Endothelial cell of umbilical vein (primary cell): ENCODE measurements at regions of chr6 and their contacts with region 1.

Region 1: DNA sequence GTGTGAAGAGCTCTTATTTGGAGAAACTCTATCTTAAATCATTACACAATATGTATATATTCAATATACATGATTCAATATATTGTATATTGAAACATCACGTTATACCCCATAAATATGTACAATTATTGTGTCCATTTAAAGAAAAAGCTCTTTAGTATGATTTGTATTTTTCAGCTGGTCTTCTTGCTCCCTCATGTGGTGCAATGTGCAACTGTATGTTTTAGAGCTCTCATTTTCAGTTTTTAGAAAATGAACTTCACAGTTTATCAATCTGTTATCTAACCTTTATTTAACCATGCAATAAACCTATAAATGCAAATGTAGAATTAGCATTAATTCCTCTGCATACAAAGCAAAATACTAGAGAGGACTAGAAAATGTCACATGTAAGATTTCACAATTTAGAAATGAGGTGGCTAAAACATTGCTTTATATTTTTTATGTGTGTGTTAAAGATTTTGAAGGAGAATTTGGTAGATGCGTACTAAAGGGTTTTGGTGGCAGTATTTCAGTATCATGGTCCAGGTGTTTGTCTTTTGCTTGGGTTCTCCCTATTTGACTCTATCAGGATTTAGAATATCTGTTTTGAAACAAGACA is 167.1 kb downstream of the PHF3 start:
- DNase-seq: peak; percentile 47
- H3K4me3 ChIP-seq: no peak overlapping the region
- H3K27ac ChIP-seq: no peak overlapping the region
- H3K4me1 ChIP-seq: peaks cover 40% of the 10 kb centered on the region
- H3K27me3 ChIP-seq: no peaks in the 10 kb centered on the region
- CTCF ChIP-seq: peak; percentile 41 to 42
- POLR2A ChIP-seq: no peak

Region 2: DNA sequence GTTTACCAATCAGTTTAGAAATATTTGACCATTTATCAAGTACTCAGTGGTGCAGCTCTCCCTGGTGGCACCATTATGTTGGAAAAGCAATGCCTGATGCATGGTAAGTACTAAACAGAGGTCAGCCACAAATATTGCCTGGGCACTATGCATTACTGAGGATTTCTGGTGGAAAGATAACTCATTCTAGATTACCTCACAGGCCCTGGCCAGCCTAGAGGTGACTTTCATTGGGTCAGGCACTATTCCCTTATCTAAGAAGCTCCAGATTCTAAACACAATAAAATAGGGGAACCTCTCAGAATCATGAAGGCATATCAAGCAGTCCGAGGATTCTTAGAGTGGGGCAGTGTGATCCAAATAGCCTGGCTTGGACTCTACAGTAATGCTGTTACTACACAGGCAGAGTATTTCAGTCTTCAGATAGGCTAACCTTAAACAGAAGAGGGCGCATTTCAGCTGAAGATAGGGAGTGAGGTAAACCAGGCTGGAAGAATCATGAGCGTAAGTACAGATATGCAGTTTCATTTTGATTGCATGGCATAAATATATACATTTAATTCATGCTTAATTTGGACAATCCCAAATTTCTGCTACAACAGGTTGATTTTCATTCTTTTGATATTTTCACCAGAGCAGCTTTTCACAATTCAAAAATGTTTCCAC is 495.0 kb before region 1 on chr6:
- CTCF ChIA-PET with region 1: interaction called, 53 read pairs
- POLR2A ChIA-PET with region 1: no interaction called
- dilution Hi-C with region 1: no loop called
- intact Hi-C with region 1: loop called (anchors 1 kb)
- DNase-seq: peak; percentile 53
- H3K4me3 ChIP-seq: peak overlapping the region in 1 of 3 experiments; percentile 11
- H3K27ac ChIP-seq: no peak overlapping the region
- H3K4me1 ChIP-seq: no peaks in the 10 kb centered on the region
- H3K27me3 ChIP-seq: no peaks in the 10 kb centered on the region
- CTCF ChIP-seq: peak; percentile 32 to 40
- POLR2A ChIP-seq: no peak

Region 3: DNA sequence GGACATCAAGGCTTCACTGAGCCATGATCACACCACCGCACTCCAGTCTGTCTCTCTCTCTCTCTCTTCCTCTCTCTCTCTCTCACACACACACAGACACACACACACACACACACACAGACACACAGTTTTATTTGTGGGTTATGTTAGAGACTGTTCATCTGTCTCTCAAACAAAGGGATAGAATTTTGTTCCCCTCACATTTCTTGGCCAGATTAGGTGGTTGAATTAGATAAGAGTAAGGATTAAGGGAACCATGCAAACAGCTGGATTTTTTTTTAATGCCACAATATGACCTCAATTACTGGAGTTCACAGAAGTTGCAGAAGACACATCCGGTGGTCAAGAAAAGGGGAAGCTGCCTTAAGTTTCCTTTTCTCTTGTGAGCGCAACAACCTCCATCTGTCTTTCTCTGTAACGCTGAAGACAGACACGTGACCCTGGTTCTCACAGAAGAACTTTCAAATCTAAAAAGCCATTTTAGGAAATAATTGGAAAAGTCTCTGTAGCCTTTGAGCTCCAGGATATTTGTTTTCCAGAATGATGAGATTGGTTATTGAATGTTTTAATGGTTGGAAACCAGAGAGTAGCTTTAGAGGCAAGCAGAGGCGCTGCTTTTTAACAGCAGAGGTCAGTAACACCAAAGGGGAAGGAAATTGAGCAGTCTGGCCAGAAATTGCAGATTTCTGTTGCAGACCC is 450.0 kb before region 1 on chr6:
- CTCF ChIA-PET with region 1: interaction called, 183 read pairs
- POLR2A ChIA-PET with region 1: interaction called, 5 read pairs
- dilution Hi-C with region 1: no loop called
- intact Hi-C with region 1: loop called (anchors 2 kb)
- DNase-seq: peak; percentile 27
- H3K4me3 ChIP-seq: no peak overlapping the region
- H3K27ac ChIP-seq: no peak overlapping the region
- H3K4me1 ChIP-seq: peaks cover 26% of the 10 kb centered on the region
- H3K27me3 ChIP-seq: no peaks in the 10 kb centered on the region
- CTCF ChIP-seq: peak in 1 of 2 donors; percentile 17
- POLR2A ChIP-seq: no peak

Region 4: DNA sequence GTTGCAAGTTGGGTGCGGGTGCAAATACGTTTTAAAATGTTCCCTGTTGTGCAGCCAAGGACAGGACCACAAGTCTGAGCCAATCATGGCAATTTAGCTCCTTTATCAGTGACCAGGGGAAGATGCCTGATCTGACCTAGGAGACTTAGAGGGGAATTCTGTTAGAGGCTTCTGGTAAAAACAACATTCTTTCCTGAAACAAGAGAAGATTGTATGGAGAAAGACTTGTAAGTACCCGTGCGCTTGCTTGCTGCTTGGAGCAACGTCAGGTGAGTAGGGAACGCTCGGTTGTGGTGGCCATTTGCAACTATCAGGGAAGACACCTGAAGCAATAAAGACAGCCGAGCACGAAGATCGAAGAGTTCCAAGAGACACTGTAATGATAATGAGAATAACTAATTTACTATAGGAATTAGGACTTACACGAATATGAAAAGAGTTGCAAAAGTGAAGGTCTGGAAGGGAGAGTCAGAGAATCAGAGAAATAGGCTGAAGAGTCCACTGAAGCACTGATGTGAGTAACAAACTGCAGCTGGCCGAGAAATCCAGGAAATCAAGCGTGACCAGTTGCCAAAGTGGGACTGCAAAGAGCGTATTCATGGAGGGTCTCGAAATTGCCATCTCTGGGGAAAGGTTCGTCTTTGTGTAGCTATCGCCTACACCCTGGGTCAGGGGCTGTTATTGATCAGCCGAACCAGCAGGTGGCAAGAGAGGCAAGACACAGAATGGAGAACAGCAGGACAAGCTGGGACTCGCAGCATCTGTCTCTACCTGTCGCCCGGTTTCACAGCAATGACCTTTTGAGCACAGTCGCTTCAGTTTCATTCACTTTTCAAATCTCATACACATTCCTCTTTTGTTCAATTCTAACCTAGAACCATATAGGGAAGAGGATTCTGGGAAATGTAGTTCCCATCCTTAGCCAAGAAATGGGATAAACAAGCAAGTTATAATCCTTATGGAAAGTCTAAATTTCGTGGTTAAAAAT is 204.4 kb before region 1 on chr6:
- CTCF ChIA-PET with region 1: interaction called, 50 read pairs
- POLR2A ChIA-PET with region 1: no interaction called
- dilution Hi-C with region 1: no loop called
- intact Hi-C with region 1: loop called (anchors 1 kb)
- DNase-seq: peak; percentile 73
- H3K4me3 ChIP-seq: peak overlapping the region; percentile 12 to 63 (median 42)
- H3K27ac ChIP-seq: no peak overlapping the region
- H3K4me1 ChIP-seq: peaks cover 2% of the 10 kb centered on the region
- H3K27me3 ChIP-seq: peaks cover 0 to 2% of the 10 kb centered on the region in 2 experiments
- CTCF ChIP-seq: peak; percentile 79 to 83
- POLR2A ChIP-seq: no peak

Region 5: DNA sequence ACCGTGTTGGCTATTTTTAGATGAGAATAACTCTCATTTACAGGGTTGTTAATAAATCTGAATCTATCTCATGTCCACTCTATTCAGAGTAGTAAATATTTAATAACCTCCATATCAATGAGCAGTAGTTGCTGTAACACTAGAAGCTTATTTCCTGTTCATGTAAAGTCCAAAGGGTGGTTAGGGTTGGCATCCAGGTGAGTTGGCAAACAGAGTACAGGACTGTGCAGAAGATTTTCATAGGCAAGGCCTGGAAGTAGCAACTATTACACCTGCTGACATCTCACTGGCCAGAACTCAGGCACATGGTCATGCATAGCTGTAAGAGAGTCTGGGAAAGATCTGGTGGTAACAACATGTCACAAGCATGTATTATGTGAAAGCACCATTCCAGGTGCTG is 19.6 kb before region 1 on chr6:
- CTCF ChIA-PET with region 1: interaction called, 14 read pairs
- POLR2A ChIA-PET with region 1: no interaction called
- dilution Hi-C with region 1: no loop called
- intact Hi-C with region 1: no loop called
- DNase-seq: no peak
- H3K4me3 ChIP-seq: no peak overlapping the region
- H3K27ac ChIP-seq: no peak overlapping the region
- H3K4me1 ChIP-seq: no peaks in the 10 kb centered on the region
- H3K27me3 ChIP-seq: no peaks in the 10 kb centered on the region
- CTCF ChIP-seq: no peak
- POLR2A ChIP-seq: no peak

Region 6: GRCh38 chr6:63904650-63905248 is 102.0 kb after region 1 on chr6:
- CTCF ChIA-PET with region 1: no interaction called
- POLR2A ChIA-PET with region 1: no interaction called
- dilution Hi-C with region 1: no loop called
- intact Hi-C with region 1: loop called (anchors 2 kb)
- DNase-seq: peak; percentile 76
- H3K4me3 ChIP-seq: no peak overlapping the region
- H3K27ac ChIP-seq: peak overlapping the region; percentile 73
- H3K4me1 ChIP-seq: peaks cover 8% of the 10 kb centered on the region
- H3K27me3 ChIP-seq: no peaks in the 10 kb centered on the region
- CTCF ChIP-seq: no peak
- POLR2A ChIP-seq: no peak